Ascending aorta (tissue), 2 donors: ENCODE measurements at regions of chr16 and their contacts with region 1.

Region 1: GRCh38 chr16:84532291-84532724 is 27.8 kb upstream of the MEAK7 start:
- DNase-seq: peak in 1 of 2 donors; percentile 91
- H3K4me3 ChIP-seq: no peak overlapping the region
- H3K27ac ChIP-seq: peak overlapping the region; percentile 58 to 80
- H3K4me1 ChIP-seq: peaks cover 26% of the 10 kb centered on the region in 2 donors
- H3K27me3 ChIP-seq: no peaks in the 10 kb centered on the region
- CTCF ChIP-seq: no peak

Region 2: DNA sequence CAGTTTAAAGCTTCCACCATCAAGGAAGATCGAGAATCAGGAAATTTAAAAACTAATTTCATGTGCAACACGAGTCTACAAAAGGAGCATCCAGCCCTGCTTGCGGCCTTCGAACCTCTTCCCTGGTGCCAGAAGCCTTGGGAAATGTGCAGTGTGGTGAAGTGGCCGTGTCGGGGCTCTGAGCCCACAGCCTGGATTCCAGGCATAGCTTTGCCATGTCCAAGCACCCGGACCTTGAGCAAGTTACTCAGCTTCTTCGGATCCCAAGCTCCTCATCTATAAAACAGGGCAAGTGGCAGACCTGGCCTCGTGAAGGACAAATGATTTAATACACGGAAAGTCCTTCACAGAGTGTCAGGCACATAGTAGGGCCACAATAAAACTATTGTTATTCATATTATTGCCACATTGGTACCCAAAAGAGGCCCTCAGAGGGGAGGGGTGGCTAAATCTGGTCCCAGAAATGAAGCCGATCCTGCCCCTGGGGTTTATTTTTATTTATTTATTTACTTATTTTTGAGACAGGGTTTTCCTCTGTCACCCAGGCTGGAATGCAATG is 50.7 kb after region 1 on chr16:
- intact Hi-C with region 1: loop called (anchors 5 kb)
- DNase-seq: peak in 1 of 2 donors; percentile 74
- H3K4me3 ChIP-seq: no peak overlapping the region
- H3K27ac ChIP-seq: peak overlapping the region; percentile 51 to 61
- H3K4me1 ChIP-seq: peaks cover 12 to 27% of the 10 kb centered on the region in 2 donors
- H3K27me3 ChIP-seq: no peaks in the 10 kb centered on the region
- CTCF ChIP-seq: no peak

Region 3: DNA sequence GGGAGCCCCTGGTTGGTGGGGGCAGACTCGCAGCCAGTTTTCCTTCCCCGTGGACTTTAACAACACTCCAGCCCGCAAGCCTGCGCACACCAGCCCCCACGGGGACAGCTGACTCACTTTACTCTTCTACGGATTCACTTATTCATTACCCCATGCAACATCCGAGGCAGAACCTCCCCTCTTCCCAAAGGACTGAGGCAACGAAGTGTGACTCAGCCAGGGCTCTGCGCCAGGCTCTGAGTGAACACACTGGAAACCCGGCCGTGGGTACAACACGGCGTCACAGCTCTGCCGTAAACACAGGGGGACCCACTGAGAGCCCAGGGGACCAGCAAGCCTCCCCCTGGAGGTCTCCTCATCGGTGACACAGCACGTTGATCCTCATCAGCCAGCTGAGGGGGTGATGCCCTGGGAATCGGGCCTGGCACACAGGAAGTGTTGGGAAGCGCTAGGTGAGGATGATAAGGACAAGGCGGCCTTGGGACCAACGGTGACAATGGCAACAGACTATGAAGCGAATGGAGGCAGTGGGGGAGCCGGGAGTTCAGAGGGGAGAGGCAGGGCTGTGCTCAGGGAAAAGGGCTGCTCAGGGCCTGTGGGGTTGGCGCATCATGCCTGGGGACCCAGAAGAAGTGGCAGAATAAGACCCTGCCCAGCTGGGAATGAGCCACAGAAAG is 71.0 kb after region 1 on chr16:
- intact Hi-C with region 1: loop called (anchors 1 kb)
- DNase-seq: peak; percentile 89 to 97
- H3K4me3 ChIP-seq: peak overlapping the region in 1 of 2 donors; percentile 36
- H3K27ac ChIP-seq: peak overlapping the region; percentile 63 to 64
- H3K4me1 ChIP-seq: peaks cover 6 to 24% of the 10 kb centered on the region in 2 donors
- H3K27me3 ChIP-seq: no peaks in the 10 kb centered on the region
- CTCF ChIP-seq: no peak